Mammary epithelial cell (primary cell): ENCODE measurements at regions of chr11 and their contacts with region 1.

Region 1: GRCh38 chr11:387193-387793 is 6.7 kb upstream of the PKP3 start:
- DNase-seq: no peak
- H3K4me3 ChIP-seq: no peak overlapping the region
- H3K27ac ChIP-seq: no peak overlapping the region
- H3K4me1 ChIP-seq: peaks cover 10% of the 10 kb centered on the region
- H3K27me3 ChIP-seq: no peaks in the 10 kb centered on the region
- CTCF ChIP-seq: peak in 1 of 2 donors; percentile 1

Region 2: GRCh38 chr11:304915-305843 is 82.1 kb before region 1 on chr11:
- CTCF ChIA-PET with region 1: no interaction called
- dilution Hi-C with region 1: loop called (anchors 5 kb)
- in situ Hi-C with region 1: no loop called
- intact Hi-C with region 1: no loop called
- DNase-seq: peak; percentile 25
- H3K4me3 ChIP-seq: no peak overlapping the region
- H3K27ac ChIP-seq: no peak overlapping the region
- H3K4me1 ChIP-seq: peaks cover 8% of the 10 kb centered on the region
- H3K27me3 ChIP-seq: no peaks in the 10 kb centered on the region
- CTCF ChIP-seq: peak; percentile 70 to 71